Left cardiac atrium (tissue), 4 donors: ENCODE measurements at regions of chr18 and their contacts with region 1.

Region 1: DNA sequence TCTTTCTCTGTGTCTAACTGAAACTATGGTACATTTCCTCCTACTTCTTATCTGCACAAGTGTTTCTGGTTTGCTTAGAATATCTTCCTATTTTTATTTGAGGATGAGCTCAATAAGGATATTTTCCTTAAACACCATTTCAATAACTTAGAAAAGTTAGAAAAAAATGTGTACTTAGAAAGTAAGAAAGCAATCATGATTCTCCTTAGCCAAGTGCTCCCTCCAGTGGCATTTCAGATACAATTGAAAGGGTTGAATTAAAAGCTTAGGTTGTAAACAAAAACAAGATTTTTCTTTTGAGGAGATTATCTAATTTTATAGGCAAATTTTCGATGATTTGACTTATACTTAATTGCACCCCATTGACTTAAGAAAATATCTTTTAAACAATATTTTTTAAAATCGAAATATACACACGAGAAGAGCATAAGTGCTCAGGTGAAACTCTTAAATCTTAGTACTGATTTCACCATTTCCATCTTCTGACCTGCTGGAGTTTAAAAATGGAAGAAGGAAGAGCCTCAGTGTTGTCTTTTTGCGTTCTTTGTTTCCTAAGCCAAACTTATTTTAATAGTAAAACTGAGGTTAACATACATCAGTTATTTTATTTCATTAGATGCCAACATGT is 26.9 kb downstream of the C18orf63 start:
- DNase-seq: no peak
- ATAC-seq: no peak

Region 2: DNA sequence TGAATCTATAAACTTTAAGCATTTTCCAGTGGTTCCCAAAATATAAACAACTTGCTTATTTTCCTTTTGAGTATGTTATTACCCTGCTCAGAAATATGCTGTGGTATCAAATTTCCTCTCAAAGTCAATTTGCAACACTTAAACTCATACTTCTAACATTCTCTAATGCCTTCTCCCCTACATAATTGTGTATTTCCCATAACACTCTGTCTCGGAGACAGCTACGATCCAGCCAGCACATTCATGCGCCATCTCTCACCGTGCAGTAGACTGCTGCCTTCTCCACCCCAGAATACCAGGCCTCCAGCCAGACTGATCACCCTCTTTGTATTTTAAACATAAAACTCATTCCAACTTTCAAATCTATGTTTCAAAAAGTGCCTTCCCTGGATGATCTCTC is 152.4 kb before region 1 on chr18:
- intact Hi-C with region 1: loop called in 1 of 2 experiments (anchors 5 kb)
- DNase-seq: no peak
- ATAC-seq: peak in 1 of 2 donors; percentile 72

Region 3: DNA sequence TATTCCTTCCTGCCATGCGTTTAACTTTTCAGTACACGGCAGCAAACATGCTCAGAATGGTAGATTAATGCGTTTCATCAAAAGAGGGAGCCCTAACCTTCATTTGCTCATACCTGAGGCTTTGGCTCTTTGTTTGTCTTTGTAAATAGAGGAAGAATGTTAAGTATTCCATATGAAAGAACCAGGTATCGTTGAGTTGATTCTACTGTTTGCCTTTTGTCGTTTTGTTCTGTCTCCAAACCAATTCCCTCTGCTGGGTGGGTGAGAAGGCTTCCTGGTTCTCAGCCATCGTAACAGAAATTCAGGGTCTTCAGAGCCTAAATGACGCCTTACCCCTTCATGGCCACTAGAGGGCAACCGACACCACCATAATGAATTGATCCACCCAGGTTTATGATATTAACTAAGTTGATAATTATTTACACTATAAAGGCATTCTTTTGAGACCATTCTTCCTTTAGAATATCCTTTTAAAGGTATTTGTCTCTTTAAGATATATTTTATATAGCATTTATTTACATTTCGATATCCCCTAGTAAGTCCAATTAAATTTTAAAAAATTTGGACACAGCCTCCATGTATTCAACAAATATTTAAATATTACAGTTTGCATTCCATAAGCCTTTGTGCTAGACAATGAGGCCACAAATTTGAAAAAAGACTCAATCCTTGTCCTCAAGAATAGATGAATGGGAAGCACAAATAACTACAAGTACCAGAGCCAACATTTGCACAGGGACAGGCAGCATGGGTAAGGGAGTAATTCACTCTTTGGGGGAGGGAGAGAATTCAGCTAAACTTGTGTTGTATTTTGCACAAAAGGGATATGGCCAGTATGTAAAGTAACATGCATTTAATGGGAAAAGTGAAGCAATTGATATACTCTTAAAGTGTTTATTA is 146.1 kb before region 1 on chr18:
- intact Hi-C with region 1: loop called (anchors 2 to 5 kb)
- DNase-seq: no peak
- ATAC-seq: peak; percentile 75 to 86

Region 4: GRCh38 chr18:74242438-74243096 is 100.0 kb before region 1 on chr18:
- intact Hi-C with region 1: loop called in 1 of 2 experiments (anchors 5 kb)
- DNase-seq: no peak
- ATAC-seq: peak; percentile 73 to 86

Region 5: GRCh38 chr18:74436158-74436769 is 93.7 kb after region 1 on chr18:
- intact Hi-C with region 1: no loop called
- DNase-seq: no peak
- ATAC-seq: peak; percentile 41 to 47